ENCODE measurements at regions of chr13 and their contacts with region 1.

Region 1: DNA sequence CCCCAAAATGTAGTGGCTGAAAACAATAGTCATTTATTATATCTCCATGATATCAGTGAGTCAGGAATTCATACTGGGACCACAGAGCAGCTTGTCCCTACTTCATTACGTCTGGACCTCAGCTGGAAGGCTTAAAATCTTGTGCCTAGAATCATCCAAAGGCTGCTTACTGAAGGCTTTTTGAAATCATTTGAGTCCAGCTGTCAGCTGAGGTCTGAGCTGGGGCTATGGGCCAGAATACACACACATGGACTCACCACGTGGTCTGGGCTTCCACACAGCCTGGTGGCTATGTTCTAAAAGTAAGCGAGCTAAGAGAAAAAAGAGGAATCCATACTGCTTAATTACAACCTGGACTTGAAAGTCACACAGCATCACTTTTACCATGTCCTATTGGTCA is 209.2 kb downstream of the KCTD12 start:
- DNase-seq: peak; percentile 15
- H3K4me3 ChIP-seq: no peak overlapping the region
- H3K27ac ChIP-seq: no peak overlapping the region
- H3K4me1 ChIP-seq: no peaks in the 10 kb centered on the region
- H3K27me3 ChIP-seq: no peaks in the 10 kb centered on the region

Region 2: GRCh38 chr13:76894401-76895110 is 217.5 kb after region 1 on chr13:
- in situ Hi-C with region 1: loop called (anchors 10 kb)
- DNase-seq: no peak
- H3K4me3 ChIP-seq: no peak overlapping the region
- H3K27ac ChIP-seq: no peak overlapping the region
- H3K4me1 ChIP-seq: peaks cover 10% of the 10 kb centered on the region
- H3K27me3 ChIP-seq: peaks cover 7% of the 10 kb centered on the region; the same call in 1 of the 2 replicates

Measured in GM23248 (cell line).